MCF 10A (cell line): ENCODE measurements at regions of chr14 and their contacts with region 1.

Region 1: GRCh38 chr14:56474419-56475022 is 105.1 kb upstream of the TMEM260 start:
- DNase-seq: peak; percentile 56
- H3K4me3 Mint-ChIP-seq: no peak overlapping the region
- H3K27ac Mint-ChIP-seq: no peak overlapping the region
- H3K4me1 Mint-ChIP-seq: peaks cover 5% of the 10 kb centered on the region
- H3K27me3 Mint-ChIP-seq: peaks cover 18% of the 10 kb centered on the region
- CTCF ChIP-seq: peak; percentile 82

Region 2: DNA sequence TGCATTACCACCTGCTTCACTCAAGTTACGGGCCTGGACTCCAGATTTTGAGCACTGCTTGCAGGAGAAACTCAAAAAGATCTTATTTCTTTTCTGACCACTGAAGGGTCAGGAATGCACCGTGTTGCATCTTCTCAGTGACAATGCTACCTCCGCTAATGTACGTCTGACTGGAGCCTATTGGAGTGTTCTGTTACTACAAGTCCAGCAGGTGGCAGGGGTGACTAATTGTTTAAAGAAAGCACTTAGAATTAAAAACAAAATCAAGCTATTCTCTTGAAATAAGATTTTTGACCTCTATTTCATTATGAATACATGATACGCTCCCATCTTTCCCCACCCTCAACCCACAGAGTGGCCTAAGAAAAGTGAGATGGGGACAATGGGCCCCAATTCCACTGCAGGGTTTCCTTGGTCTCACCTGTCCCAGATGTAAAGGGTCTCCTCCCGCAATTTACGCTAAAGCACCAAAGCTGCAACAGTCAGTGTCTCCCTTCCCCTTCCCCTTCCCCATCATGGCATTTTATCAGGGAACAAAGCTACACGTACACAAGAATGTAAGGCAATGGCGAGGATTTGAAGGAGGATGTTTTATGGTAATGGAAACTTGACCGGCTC is 1036.3 kb before region 1 on chr14:
- CTCF ChIA-PET with region 1: interaction called, 26 read pairs
- POLR2A ChIA-PET with region 1: no interaction called
- intact Hi-C with region 1: loop called (anchors 2 kb)
- DNase-seq: peak; percentile 68
- H3K4me3 Mint-ChIP-seq: no peak overlapping the region
- H3K27ac Mint-ChIP-seq: no peak overlapping the region
- H3K4me1 Mint-ChIP-seq: no peaks in the 10 kb centered on the region
- H3K27me3 Mint-ChIP-seq: peaks cover 16% of the 10 kb centered on the region
- CTCF ChIP-seq: peak; percentile 63

Region 3: DNA sequence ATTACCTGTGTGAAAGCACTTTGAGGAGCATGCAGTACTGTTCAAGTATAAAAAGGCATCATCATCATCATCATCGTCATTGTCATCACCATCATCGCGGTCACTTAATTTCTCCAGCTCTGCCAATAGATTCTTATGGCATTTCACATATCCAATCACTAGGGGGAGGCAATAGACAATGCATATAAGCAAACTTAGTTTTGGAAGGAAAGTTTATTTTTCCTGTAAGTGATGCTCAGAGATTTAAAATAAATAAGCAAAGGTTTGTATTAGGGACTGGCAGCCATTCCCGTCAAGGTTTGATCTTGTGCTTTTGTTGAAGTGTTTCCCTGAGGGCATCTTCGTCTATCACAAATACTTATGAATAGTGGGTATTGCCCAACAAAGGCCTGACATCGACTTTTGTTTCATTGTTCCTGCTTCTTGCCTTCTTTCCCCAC is 767.1 kb before region 1 on chr14:
- CTCF ChIA-PET with region 1: interaction called, 38 read pairs
- POLR2A ChIA-PET with region 1: interaction called, 3 read pairs
- intact Hi-C with region 1: loop called (anchors 1 kb)
- DNase-seq: peak; percentile 50
- H3K4me3 Mint-ChIP-seq: no peak overlapping the region
- H3K27ac Mint-ChIP-seq: no peak overlapping the region
- H3K4me1 Mint-ChIP-seq: peaks cover 25% of the 10 kb centered on the region
- H3K27me3 Mint-ChIP-seq: no peaks in the 10 kb centered on the region
- CTCF ChIP-seq: peak; percentile 58

Region 4: GRCh38 chr14:55843718-55844403 is 630.7 kb before region 1 on chr14:
- CTCF ChIA-PET with region 1: interaction called, 3 read pairs
- POLR2A ChIA-PET with region 1: no interaction called
- intact Hi-C with region 1: loop called (anchors 2 kb)
- DNase-seq: no peak
- H3K4me3 Mint-ChIP-seq: no peak overlapping the region
- H3K27ac Mint-ChIP-seq: no peak overlapping the region
- H3K4me1 Mint-ChIP-seq: peaks cover 16% of the 10 kb centered on the region
- H3K27me3 Mint-ChIP-seq: no peaks in the 10 kb centered on the region
- CTCF ChIP-seq: peak; percentile 30

Region 5: DNA sequence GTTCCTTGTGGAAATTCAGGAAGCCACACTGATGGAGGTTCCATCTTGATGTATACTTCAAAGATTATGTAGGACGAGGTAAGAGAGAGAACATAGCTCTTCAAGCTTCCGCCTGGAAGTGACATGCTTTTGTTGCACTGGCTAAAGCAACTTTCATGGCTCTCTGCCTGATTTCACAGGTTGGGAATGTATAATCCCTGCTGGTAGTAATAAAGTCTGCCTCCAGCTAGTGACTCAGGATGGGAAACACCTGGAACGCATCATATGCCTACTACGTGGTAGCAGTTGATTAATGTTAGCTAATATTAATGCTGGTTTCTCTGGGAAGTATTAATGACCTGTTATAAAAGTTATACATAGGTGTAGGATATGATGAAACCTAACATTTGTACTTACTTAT is 285.2 kb before region 1 on chr14:
- CTCF ChIA-PET with region 1: no interaction called
- POLR2A ChIA-PET with region 1: no interaction called
- intact Hi-C with region 1: no loop called
- DNase-seq: peak; percentile 81
- H3K4me3 Mint-ChIP-seq: no peak overlapping the region
- H3K27ac Mint-ChIP-seq: no peak overlapping the region
- H3K4me1 Mint-ChIP-seq: no peaks in the 10 kb centered on the region
- H3K27me3 Mint-ChIP-seq: no peaks in the 10 kb centered on the region
- CTCF ChIP-seq: no peak

Region 6: DNA sequence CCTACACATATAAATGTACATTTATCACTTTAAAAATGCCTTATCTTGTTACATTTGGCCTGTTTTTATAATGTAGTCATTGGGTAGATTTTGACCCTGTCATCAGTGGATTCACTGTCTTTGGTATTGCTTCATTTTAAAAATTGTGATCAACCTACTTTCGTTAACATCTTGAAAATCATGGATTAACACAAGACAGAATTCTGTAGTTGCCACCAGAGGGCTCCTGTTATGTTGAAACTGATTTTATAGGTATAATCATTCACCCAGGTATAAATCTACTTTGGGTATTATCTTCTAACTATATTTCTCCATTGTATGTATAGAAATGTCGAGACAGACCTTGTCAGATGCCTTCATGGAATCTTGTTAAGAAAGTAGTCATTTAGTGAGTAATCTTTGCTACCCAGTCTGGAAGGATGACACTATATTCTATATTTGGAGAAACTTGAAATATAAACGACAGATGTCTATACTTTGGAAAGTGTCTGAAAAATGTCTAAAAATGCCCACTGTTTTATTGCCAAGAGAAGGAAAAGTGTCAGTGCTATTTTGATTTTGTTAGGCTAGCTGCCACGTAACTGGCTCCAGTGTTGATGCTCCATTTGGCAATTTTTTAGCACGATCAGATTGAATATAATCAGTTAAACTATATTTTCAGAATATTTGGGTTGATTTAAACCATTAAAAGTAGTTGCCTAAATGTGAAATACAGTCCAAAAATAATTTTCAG is 226.9 kb before region 1 on chr14:
- CTCF ChIA-PET with region 1: interaction called, 11 read pairs
- POLR2A ChIA-PET with region 1: no interaction called
- intact Hi-C with region 1: loop called (anchors 5 kb)
- DNase-seq: peak; percentile 41
- H3K4me3 Mint-ChIP-seq: no peak overlapping the region
- H3K27ac Mint-ChIP-seq: no peak overlapping the region
- H3K4me1 Mint-ChIP-seq: peaks cover 5% of the 10 kb centered on the region
- H3K27me3 Mint-ChIP-seq: no peaks in the 10 kb centered on the region
- CTCF ChIP-seq: peak; percentile 28

Region 7: GRCh38 chr14:56300495-56300894 is 174.0 kb before region 1 on chr14:
- CTCF ChIA-PET with region 1: no interaction called
- POLR2A ChIA-PET with region 1: no interaction called
- intact Hi-C with region 1: no loop called
- DNase-seq: no peak
- H3K4me3 Mint-ChIP-seq: no peak overlapping the region
- H3K27ac Mint-ChIP-seq: no peak overlapping the region
- H3K4me1 Mint-ChIP-seq: no peaks in the 10 kb centered on the region
- H3K27me3 Mint-ChIP-seq: no peaks in the 10 kb centered on the region
- CTCF ChIP-seq: no peak

Region 8: GRCh38 chr14:56422703-56423213 is 51.8 kb before region 1 on chr14:
- CTCF ChIA-PET with region 1: interaction called, 10 read pairs
- POLR2A ChIA-PET with region 1: no interaction called
- intact Hi-C with region 1: no loop called
- DNase-seq: peak; percentile 77
- H3K4me3 Mint-ChIP-seq: no peak overlapping the region
- H3K27ac Mint-ChIP-seq: no peak overlapping the region
- H3K4me1 Mint-ChIP-seq: no peaks in the 10 kb centered on the region
- H3K27me3 Mint-ChIP-seq: no peaks in the 10 kb centered on the region
- CTCF ChIP-seq: peak; percentile 58

Region 9: GRCh38 chr14:56491299-56492285 is 17.1 kb after region 1 on chr14:
- CTCF ChIA-PET with region 1: interaction called, 22 read pairs
- POLR2A ChIA-PET with region 1: interaction called, 4 read pairs
- intact Hi-C with region 1: no loop called
- DNase-seq: peak; percentile 49
- H3K4me3 Mint-ChIP-seq: no peak overlapping the region
- H3K27ac Mint-ChIP-seq: no peak overlapping the region
- H3K4me1 Mint-ChIP-seq: peaks cover 13% of the 10 kb centered on the region
- H3K27me3 Mint-ChIP-seq: peaks cover 27% of the 10 kb centered on the region
- CTCF ChIP-seq: peak; percentile 51

Region 10: DNA sequence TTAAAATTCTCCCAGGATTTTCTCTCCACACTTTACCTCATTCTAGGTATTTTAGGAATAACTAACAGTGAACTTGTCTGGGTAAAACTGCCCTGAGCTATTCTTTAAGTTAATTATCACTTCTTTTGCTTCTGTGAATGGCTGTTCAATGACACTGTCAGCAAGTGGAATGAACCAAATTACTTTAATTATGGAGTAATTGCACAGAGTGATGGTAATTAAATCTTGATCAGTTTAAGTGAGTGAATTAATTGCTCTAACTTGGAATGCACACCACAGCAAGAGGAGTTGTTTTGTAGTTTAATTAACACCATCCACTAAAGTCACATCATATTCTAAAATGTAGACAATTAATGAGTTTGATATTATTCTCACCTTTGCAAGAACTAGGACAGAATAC is 68.9 kb after region 1 on chr14:
- CTCF ChIA-PET with region 1: no interaction called
- POLR2A ChIA-PET with region 1: no interaction called
- intact Hi-C with region 1: no loop called
- DNase-seq: no peak
- H3K4me3 Mint-ChIP-seq: no peak overlapping the region
- H3K27ac Mint-ChIP-seq: no peak overlapping the region
- H3K4me1 Mint-ChIP-seq: no peaks in the 10 kb centered on the region
- H3K27me3 Mint-ChIP-seq: no peaks in the 10 kb centered on the region
- CTCF ChIP-seq: no peak